ENCODE measurements at regions of chr12 and their contacts with region 1.

Region 1: DNA sequence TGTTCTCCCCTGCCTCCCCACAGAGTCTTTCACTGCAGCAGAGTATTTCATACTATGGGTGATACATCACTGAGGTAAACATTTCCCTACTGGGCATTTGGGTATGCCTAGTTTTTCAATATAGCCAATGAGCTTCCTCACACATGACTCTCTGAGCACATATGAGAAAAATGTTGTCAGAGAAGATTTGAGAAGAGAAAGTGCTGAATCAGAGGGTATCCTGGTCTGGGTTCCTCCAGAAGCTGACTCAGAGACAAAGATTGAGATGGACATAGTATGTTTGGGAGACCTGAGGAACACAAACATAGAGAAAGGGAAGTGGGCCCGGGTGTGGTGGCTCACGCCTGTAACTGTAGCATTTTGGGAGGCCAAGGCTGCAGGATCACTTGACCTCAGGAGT is 12.6 kb downstream of the SLC8B1 start:
- DNase-seq: no peak
- ATAC-seq: no peak; a peak in 1 of 6 replicates
- H3K4me3 ChIP-seq: no peak overlapping the region
- H3K27ac ChIP-seq: no peak overlapping the region
- H3K4me1 ChIP-seq: peaks cover 4% of the 10 kb centered on the region; the same call in 1 of the 3 replicates
- CTCF ChIP-seq: no peak
- EP300 ChIP-seq: no peak
- POLR2A ChIP-seq: no peak
- RAD21 ChIP-seq: no peak

Region 2: DNA sequence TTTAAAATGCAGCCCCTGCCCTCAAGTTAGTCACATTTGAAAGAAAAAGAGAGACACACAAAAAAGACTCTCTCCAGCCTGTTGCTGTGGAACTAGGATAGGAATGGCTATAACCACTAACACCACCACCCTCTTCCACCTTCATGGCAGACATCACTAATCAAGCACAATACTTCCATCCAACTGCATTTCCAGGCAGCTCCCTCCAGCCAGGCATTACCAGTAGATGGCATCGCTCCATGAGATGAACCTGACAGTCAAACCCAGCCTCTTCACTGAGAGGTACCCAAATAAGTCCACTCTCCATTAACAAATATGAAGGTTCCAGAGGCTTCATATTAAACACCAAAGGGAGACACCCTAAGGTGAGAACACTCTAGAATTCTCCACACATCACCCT is 11.9 kb before region 1 on chr12:
- CTCF ChIA-PET with region 1: interaction called, 22 read pairs
- POLR2A ChIA-PET with region 1: no interaction called
- DNase-seq: peak in 1 of 2 experiments; percentile 71
- ATAC-seq: peak in 1 of 2 experiments; percentile 23; a peak in 1 of 6 replicates
- H3K4me3 ChIP-seq: no peak overlapping the region
- H3K27ac ChIP-seq: no peak overlapping the region
- H3K4me1 ChIP-seq: peaks cover 8% of the 10 kb centered on the region
- CTCF ChIP-seq: peak; percentile 27; the same call in 1 of the 3 replicates
- EP300 ChIP-seq: no peak
- POLR2A ChIP-seq: no peak
- RAD21 ChIP-seq: peak in 1 of 2 experiments; percentile 31; a peak in 1 of 5 replicates